ENCODE measurements at regions of chr20 and their contacts with region 1.

Region 1: DNA sequence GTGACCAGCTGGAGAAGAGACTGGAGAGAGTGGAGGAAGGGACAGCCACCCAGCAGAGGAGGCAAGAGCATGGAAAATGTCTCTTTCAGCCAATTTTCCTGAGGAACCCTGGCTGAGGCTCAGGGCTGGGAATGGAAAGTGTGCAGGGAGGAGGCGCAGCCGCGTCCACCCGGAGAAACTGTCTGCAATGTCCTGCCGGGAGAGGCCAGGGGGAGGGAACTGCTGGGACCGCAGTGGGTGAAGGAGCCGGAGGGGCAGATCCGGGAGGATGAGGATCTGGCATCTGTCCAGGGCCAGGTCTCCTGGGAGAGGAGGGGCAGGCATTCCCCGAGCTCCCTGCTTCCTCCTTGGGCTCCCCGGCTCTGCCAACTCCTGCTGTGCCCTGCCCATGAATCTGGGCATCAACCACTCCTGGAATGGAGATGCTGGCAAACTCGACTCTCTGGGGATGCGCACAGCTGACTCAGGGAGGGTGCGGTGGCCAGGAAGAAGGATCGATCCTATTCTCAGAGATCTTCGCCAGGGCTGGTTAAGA is 17.4 kb upstream of the HM13 start:
- DNase-seq: no peak
- ATAC-seq: no peak
- H3K4me3 ChIP-seq: no peak overlapping the region
- H3K27ac ChIP-seq: no peak overlapping the region
- H3K4me1 ChIP-seq: no peaks in the 10 kb centered on the region
- H3K27me3 ChIP-seq: peaks cover 6 to 26% of the 10 kb centered on the region in 2 experiments; a peak in 2 of 5 replicates
- CTCF ChIP-seq: no peak
- EP300 ChIP-seq: no peak
- POLR2A ChIP-seq: no peak
- RAD21 ChIP-seq: no peak

Region 2: GRCh38 chr20:31308535-31309162 is 188.2 kb before region 1 on chr20 and contains the start of gene DEFB116:
- CTCF ChIA-PET with region 1: no interaction called
- POLR2A ChIA-PET with region 1: no interaction called
- in situ Hi-C with region 1: no loop called
- intact Hi-C with region 1: loop called (anchors 2 kb)
- DNase-seq: no peak
- ATAC-seq: no peak
- H3K4me3 ChIP-seq: no peak within 1 kb of the TSS
- H3K27ac ChIP-seq: no peak within 1 kb of the TSS
- H3K4me1 ChIP-seq: no peaks in the 10 kb centered on the region
- H3K27me3 ChIP-seq: no peaks in the 10 kb centered on the region
- CTCF ChIP-seq: no peak
- EP300 ChIP-seq: no peak
- POLR2A ChIP-seq: no peak
- RAD21 ChIP-seq: no peak
- total RNA-seq, gene DEFB116: not detected in 2 replicates

Region 3: DNA sequence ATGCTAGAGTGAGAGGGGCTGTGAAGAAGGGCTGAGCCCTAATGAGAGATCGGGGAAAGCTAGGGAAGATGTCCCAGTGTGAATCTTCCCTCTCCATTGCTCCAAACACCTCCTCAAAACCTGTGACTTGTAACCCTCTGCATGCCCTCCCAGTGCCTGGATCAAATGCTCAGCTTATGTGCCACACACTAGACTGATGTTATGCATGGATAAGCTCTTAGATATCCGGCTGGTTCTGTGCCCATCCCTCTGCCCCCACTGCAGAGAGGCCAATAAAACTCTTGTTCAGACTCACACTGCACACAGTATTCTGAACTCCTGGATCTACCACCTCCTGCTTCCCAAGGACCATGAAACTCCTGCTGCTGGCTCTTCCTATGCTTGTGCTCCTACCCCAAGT is 128.5 kb before region 1 on chr20 and contains the start of gene DEFB118:
- CTCF ChIA-PET with region 1: no interaction called
- POLR2A ChIA-PET with region 1: no interaction called
- in situ Hi-C with region 1: no loop called
- intact Hi-C with region 1: no loop called
- DNase-seq: no peak
- ATAC-seq: no peak; the same call in 2 of the 3 replicates
- H3K4me3 ChIP-seq: no peak within 1 kb of the TSS
- H3K27ac ChIP-seq: no peak within 1 kb of the TSS
- H3K4me1 ChIP-seq: no peaks in the 10 kb centered on the region
- H3K27me3 ChIP-seq: peaks cover 0 to 14% of the 10 kb centered on the region in 2 experiments; a peak in 3 of 5 replicates
- CTCF ChIP-seq: no peak
- EP300 ChIP-seq: no peak
- POLR2A ChIP-seq: no peak
- RAD21 ChIP-seq: no peak
- total RNA-seq, gene DEFB118: not detected in 2 replicates

Region 4: DNA sequence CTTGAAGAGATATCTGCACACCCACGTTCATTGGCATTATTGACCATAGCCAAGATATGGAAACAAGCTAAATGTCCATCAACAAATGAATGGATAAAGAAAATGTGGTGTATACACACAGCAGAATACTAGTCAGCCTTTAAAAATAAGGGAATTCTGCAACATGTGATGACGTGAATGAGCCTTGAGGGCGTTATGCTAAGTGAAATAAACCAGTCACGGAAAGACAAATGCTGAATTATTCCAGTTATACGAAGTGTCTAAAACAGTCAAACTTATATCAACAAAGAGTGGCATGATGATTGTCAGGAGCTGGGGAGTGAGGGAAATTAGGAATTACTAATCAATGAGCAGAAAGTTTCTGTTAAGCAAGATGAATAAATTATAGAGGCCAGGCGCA is 82.4 kb before region 1 on chr20:
- CTCF ChIA-PET with region 1: no interaction called
- POLR2A ChIA-PET with region 1: no interaction called
- in situ Hi-C with region 1: loop called (anchors 5 kb)
- intact Hi-C with region 1: no loop called
- DNase-seq: no peak
- ATAC-seq: no peak
- H3K4me3 ChIP-seq: no peak overlapping the region
- H3K27ac ChIP-seq: no peak overlapping the region
- H3K4me1 ChIP-seq: no peaks in the 10 kb centered on the region
- H3K27me3 ChIP-seq: no peaks in the 10 kb centered on the region; a peak in 1 of 5 replicates
- CTCF ChIP-seq: no peak
- EP300 ChIP-seq: no peak
- POLR2A ChIP-seq: no peak
- RAD21 ChIP-seq: no peak